CD8-positive, alpha-beta T cell (primary cell): ENCODE measurements at regions of chr12 and their contacts with region 1.

Region 1: GRCh38 chr12:89051065-89051677 is 301.1 kb downstream of the DUSP6 start:
- DNase-seq: peak in 3 of 9 experiments; percentile 19 to 72 (median 64)
- ATAC-seq: peak; percentile 70
- H3K4me3 ChIP-seq: no peak overlapping the region
- H3K4me3 Mint-ChIP-seq: no peak overlapping the region
- H3K27ac ChIP-seq: no peak overlapping the region
- H3K27ac Mint-ChIP-seq: no peak overlapping the region
- H3K4me1 ChIP-seq: no peaks in the 10 kb centered on the region
- H3K4me1 Mint-ChIP-seq: no peaks in the 10 kb centered on the region
- H3K27me3 ChIP-seq: no peaks in the 10 kb centered on the region
- H3K27me3 Mint-ChIP-seq: no peaks in the 10 kb centered on the region
- CTCF ChIP-seq: peak; percentile 90

Region 2: DNA sequence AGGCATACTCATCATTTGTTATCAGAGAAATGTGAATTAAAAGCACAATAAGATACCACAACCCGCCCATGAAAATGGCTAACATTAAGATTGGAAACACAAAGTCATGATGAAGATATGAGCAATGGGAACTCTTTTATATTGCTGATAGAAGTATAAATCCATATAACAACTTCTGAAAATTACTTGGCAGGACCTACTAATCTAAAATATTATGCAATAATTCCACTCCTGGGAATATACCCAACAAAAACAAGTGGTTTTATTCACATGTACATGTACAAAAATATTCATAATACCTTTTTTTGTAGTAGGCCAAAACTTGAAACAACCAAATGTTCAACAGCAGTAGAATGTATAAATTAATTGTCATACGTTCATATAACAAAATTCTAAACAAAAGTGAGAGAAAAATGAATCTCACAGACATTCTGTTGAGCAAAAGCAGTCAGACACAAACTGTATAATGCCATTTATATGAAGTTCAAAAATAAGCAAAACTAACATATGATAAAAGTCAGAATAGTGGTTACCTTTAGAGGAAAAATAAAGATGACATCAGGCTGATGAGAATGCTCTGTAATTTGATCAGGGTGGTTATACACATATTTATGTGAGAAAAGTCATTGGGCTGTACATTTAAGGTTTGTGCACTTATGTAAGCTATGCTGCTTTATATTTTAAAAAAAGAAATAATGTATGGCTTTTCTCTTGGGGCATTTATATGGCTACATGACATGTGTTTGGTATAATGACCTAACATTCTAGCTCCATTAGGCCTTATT is 161.7 kb before region 1 on chr12:
- CTCF ChIA-PET with region 1: no interaction called
- POLR2A ChIA-PET with region 1: no interaction called
- intact Hi-C with region 1: no loop called
- DNase-seq: no peak
- ATAC-seq: no peak
- H3K4me3 ChIP-seq: no peak overlapping the region
- H3K4me3 Mint-ChIP-seq: no peak overlapping the region
- H3K27ac ChIP-seq: no peak overlapping the region
- H3K27ac Mint-ChIP-seq: no peak overlapping the region
- H3K4me1 ChIP-seq: no peaks in the 10 kb centered on the region
- H3K4me1 Mint-ChIP-seq: no peaks in the 10 kb centered on the region
- H3K27me3 ChIP-seq: no peaks in the 10 kb centered on the region
- H3K27me3 Mint-ChIP-seq: no peaks in the 10 kb centered on the region
- CTCF ChIP-seq: no peak

Region 3: DNA sequence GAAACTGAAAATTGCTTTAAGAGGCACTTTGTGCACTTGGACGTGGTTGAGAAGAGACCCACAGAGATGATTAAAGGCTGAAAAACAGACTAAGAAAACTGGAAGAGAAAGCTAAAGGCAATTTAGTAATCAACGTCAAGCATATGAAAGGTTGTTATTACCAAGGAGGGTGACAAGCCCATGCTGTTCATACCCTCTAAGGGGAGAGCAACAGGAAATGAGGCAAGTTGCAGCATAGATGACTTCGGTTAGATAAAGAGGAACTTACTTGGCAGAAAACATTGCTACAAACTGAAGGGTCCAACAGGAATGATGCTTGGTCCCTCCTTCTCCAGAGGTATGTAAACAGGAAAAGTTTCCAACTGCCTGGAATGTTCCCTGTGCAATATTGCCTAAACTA is 193.4 kb after region 1 on chr12:
- CTCF ChIA-PET with region 1: no interaction called
- POLR2A ChIA-PET with region 1: no interaction called
- intact Hi-C with region 1: loop called in 1 of 2 experiments (anchors 5 kb)
- DNase-seq: peak in 4 of 9 experiments; percentile 4 to 54 (median 23)
- ATAC-seq: peak; percentile 70
- H3K4me3 ChIP-seq: peak overlapping the region in 1 of 2 experiments; percentile 5
- H3K4me3 Mint-ChIP-seq: peak overlapping the region; percentile 61
- H3K27ac ChIP-seq: no peak overlapping the region
- H3K27ac Mint-ChIP-seq: peak overlapping the region; percentile 75
- H3K4me1 ChIP-seq: peaks cover 29% of the 10 kb centered on the region
- H3K4me1 Mint-ChIP-seq: peaks cover 32% of the 10 kb centered on the region
- H3K27me3 ChIP-seq: no peaks in the 10 kb centered on the region
- H3K27me3 Mint-ChIP-seq: peaks cover 8% of the 10 kb centered on the region
- CTCF ChIP-seq: no peak

Region 4: DNA sequence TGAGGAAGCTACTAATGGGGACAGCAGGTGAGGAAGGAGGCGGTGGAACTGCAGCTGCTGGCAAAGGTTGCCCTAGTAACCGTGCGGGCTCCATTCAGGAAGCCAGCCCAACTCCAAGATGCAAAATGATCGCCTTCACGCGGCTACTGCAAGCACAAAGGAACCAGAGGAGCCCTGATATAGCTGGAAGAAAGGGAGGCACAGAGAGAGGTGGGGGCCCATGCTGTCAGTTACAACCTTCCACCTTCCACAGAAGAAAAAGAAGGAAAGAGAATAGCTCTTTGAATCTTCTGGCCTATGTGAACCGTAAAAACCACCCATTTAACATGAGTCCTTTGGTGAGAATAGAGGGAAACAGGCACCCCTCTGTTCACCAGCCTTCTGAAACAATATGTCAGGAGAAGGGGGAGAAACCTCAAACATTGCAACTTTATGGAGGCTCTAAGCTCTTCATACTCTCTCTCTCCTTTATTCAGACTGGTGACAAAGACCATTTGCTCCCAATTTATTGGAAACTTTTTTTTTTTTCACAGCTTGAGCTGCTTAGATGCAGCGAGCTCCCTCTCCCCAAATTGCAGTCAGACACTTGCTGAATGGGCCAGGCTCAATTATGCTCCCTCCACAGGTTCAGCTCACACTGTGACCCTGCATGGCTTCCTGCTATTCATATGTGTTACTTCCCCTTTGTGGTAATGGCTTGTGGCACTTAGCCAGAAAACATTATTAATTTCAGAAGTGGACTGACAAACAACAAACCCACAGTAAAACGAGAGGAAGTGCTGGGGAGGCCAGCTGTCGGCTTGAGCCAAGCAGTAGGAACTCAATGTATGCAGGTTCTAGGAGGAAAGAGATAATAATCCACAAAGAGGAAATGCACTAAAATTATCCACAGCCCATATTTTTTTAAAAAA is 294.9 kb after region 1 on chr12:
- CTCF ChIA-PET with region 1: interaction called, 4 read pairs
- POLR2A ChIA-PET with region 1: no interaction called
- intact Hi-C with region 1: loop called (anchors 5 to 10 kb)
- DNase-seq: peak in 6 of 9 experiments; percentile 15 to 83 (median 42)
- ATAC-seq: peak; percentile 72
- H3K4me3 ChIP-seq: peak overlapping the region in 1 of 2 experiments; percentile 21
- H3K4me3 Mint-ChIP-seq: peak overlapping the region; percentile 65
- H3K27ac ChIP-seq: no peak overlapping the region
- H3K27ac Mint-ChIP-seq: no peak overlapping the region
- H3K4me1 ChIP-seq: peaks cover 21% of the 10 kb centered on the region
- H3K4me1 Mint-ChIP-seq: peaks cover 39% of the 10 kb centered on the region
- H3K27me3 ChIP-seq: no peaks in the 10 kb centered on the region
- H3K27me3 Mint-ChIP-seq: peaks cover 3% of the 10 kb centered on the region
- CTCF ChIP-seq: no peak

Region 5: GRCh38 chr12:89529738-89530137 is 478.6 kb after region 1 on chr12:
- CTCF ChIA-PET with region 1: interaction called, 4 read pairs
- POLR2A ChIA-PET with region 1: no interaction called
- intact Hi-C with region 1: loop called (anchors 1 kb)
- DNase-seq: peak in 2 of 9 experiments; percentile 61 to 70
- ATAC-seq: peak; percentile 33
- H3K4me3 ChIP-seq: no peak overlapping the region
- H3K4me3 Mint-ChIP-seq: no peak overlapping the region
- H3K27ac ChIP-seq: no peak overlapping the region
- H3K27ac Mint-ChIP-seq: no peak overlapping the region
- H3K4me1 ChIP-seq: no peaks in the 10 kb centered on the region
- H3K4me1 Mint-ChIP-seq: peaks cover 21% of the 10 kb centered on the region
- H3K27me3 ChIP-seq: no peaks in the 10 kb centered on the region
- H3K27me3 Mint-ChIP-seq: no peaks in the 10 kb centered on the region
- CTCF ChIP-seq: peak; percentile 73